ENCODE measurements at regions of chr6 and their contacts with region 1.

Region 1: GRCh38 chr6:159608961-159609651 is 83.9 kb downstream of the SOD2 start:
- DNase-seq: peak; percentile 39 to 43
- H3K4me3 ChIP-seq: no peak overlapping the region
- H3K4me3 Mint-ChIP-seq: no peak overlapping the region
- H3K27ac Mint-ChIP-seq: no peak overlapping the region
- H3K4me1 ChIP-seq: no peaks in the 10 kb centered on the region
- H3K4me1 Mint-ChIP-seq: no peaks in the 10 kb centered on the region
- H3K27me3 ChIP-seq: no peaks in the 10 kb centered on the region
- H3K27me3 Mint-ChIP-seq: peaks cover 2% of the 10 kb centered on the region
- CTCF ChIP-seq: peak; percentile 20 to 72

Region 2: GRCh38 chr6:159174263-159174969 is 434.7 kb before region 1 on chr6:
- CTCF ChIA-PET with region 1: interaction called, 4 read pairs
- POLR2A ChIA-PET with region 1: no interaction called
- intact Hi-C with region 1: loop called (anchors 1 kb)
- DNase-seq: peak; percentile 58 to 74
- H3K4me3 ChIP-seq: no peak overlapping the region
- H3K4me3 Mint-ChIP-seq: no peak overlapping the region
- H3K27ac Mint-ChIP-seq: no peak overlapping the region
- H3K4me1 ChIP-seq: no peaks in the 10 kb centered on the region
- H3K4me1 Mint-ChIP-seq: no peaks in the 10 kb centered on the region
- H3K27me3 ChIP-seq: 0 out of 2 replicates have a peak, but pooled peaks cover 2% of the 10 kb centered on the region
- H3K27me3 Mint-ChIP-seq: peaks cover 15% of the 10 kb centered on the region
- CTCF ChIP-seq: peak; percentile 81 to 95

Region 3: DNA sequence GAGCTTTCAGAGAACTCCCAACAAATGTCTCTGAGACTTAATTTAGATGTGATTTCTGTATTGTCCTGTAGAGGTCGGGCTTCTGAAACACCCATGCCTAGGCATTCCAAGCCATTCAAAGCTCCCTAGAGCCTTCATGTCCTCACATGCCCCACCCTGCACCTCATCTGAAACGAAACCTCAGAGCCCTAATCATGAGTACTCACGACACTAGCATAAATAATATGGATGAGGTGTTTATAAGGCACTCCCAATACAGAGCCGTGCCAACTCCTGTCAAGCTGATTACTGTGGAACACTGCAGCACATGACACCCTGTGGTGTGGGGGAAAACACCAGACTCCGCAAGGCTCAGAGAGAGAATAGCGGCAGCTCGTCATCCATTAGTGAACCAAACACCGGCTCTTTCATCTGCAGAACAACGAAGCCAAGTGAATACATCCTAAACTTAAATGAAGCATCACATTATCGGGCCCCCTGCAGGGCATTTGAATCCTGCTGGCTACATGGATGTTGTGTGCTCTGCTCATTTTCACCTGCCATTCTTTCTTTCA is 356.1 kb before region 1 on chr6:
- CTCF ChIA-PET with region 1: interaction called, 6 read pairs
- POLR2A ChIA-PET with region 1: no interaction called
- intact Hi-C with region 1: loop called (anchors 1 kb)
- DNase-seq: peak in 1 of 2 experiments; percentile 29
- H3K4me3 ChIP-seq: no peak overlapping the region
- H3K4me3 Mint-ChIP-seq: no peak overlapping the region
- H3K27ac Mint-ChIP-seq: no peak overlapping the region
- H3K4me1 ChIP-seq: no peaks in the 10 kb centered on the region
- H3K4me1 Mint-ChIP-seq: no peaks in the 10 kb centered on the region
- H3K27me3 ChIP-seq: no peaks in the 10 kb centered on the region; the same call in 1 of the 2 replicates
- H3K27me3 Mint-ChIP-seq: peaks cover 5% of the 10 kb centered on the region
- CTCF ChIP-seq: peak; percentile 49 to 53

Region 4: GRCh38 chr6:159726918-159727716 is 118.0 kb after region 1 on chr6 and contains the start of gene WTAP:
- CTCF ChIA-PET with region 1: no interaction called
- POLR2A ChIA-PET with region 1: no interaction called
- intact Hi-C with region 1: no loop called
- DNase-seq: peak; percentile 98
- H3K4me3 ChIP-seq: peak within 1 kb of the TSS; percentile 96
- H3K4me3 Mint-ChIP-seq: peak within 1 kb of the TSS; percentile 97
- H3K27ac Mint-ChIP-seq: peak within 1 kb of the TSS; percentile 96
- H3K4me1 ChIP-seq: peaks cover 3% of the 10 kb centered on the region; the same call in 1 of the 2 replicates
- H3K4me1 Mint-ChIP-seq: peaks cover 6% of the 10 kb centered on the region
- H3K27me3 ChIP-seq: no peaks in the 10 kb centered on the region
- H3K27me3 Mint-ChIP-seq: no peaks in the 10 kb centered on the region
- CTCF ChIP-seq: no peak
- total RNA-seq, gene WTAP: 109 and 114 TPM in 2 replicates

Region 5: GRCh38 chr6:159806021-159806458 is 196.9 kb after region 1 on chr6:
- CTCF ChIA-PET with region 1: no interaction called
- POLR2A ChIA-PET with region 1: no interaction called
- intact Hi-C with region 1: no loop called
- DNase-seq: peak; percentile 39 to 60
- H3K4me3 ChIP-seq: no peak overlapping the region
- H3K4me3 Mint-ChIP-seq: no peak overlapping the region
- H3K27ac Mint-ChIP-seq: peak overlapping the region; percentile 61
- H3K4me1 ChIP-seq: peaks cover 42% of the 10 kb centered on the region
- H3K4me1 Mint-ChIP-seq: peaks cover 26% of the 10 kb centered on the region
- H3K27me3 ChIP-seq: no peaks in the 10 kb centered on the region
- H3K27me3 Mint-ChIP-seq: no peaks in the 10 kb centered on the region
- CTCF ChIP-seq: no peak

Region 6: GRCh38 chr6:160041608-160042007 is 432.5 kb after region 1 on chr6:
- CTCF ChIA-PET with region 1: no interaction called
- POLR2A ChIA-PET with region 1: no interaction called
- intact Hi-C with region 1: no loop called
- DNase-seq: no peak
- H3K4me3 ChIP-seq: no peak overlapping the region
- H3K4me3 Mint-ChIP-seq: no peak overlapping the region
- H3K27ac Mint-ChIP-seq: no peak overlapping the region
- H3K4me1 ChIP-seq: peaks cover 4% of the 10 kb centered on the region; the same call in 1 of the 2 replicates
- H3K4me1 Mint-ChIP-seq: peaks cover 6% of the 10 kb centered on the region
- H3K27me3 ChIP-seq: no peaks in the 10 kb centered on the region
- H3K27me3 Mint-ChIP-seq: no peaks in the 10 kb centered on the region
- CTCF ChIP-seq: no peak

Measured in Caco-2 (cell line).